ENCODE measurements at regions of chr6 and their contacts with region 1.

Region 1: DNA sequence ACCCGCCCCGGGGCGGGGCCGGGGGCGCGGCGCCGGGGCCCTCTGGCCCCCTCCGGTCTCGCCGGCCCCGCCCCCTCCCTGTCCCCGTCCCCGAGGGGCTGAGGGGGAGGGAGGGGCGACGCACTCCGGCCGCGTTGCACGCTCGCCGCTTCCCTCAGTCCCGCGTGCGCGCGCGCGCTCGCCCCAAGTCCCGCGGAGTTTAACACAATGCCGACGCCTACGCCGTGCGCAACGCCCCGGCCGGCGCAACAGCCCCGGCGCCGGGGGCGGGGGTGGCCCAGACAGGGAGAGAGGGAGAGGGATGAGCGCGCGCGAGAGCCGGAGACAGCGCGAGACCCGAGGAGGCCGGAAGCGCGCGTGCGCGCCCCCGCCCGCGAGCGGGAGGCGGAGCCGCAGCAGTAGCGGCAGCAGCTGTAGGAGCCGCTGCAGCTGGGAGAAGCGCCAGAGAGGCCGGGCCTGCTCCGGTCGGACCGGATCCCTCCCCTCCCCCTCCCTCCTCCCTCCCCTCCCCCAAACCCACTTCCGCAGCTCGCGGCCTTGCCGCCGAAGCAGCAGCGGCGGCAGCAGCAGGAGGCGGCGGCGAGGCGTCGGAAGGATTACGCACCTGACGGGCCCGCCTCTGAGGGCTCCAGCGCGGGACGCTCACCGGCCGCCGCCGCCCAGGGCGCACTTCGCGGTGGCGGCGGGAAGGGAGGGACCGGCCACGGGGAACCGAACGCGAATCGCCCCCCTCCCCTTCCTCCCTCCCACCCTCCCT is 905 bp downstream of the ZBTB2 start:
- DNase-seq: peak; percentile 95 to 99 (median 98)
- H3K4me3 ChIP-seq: peak overlapping the region; percentile 56 to 92 (median 82)
- H3K4me3 Mint-ChIP-seq: peak overlapping the region; percentile 48 to 66
- H3K27ac ChIP-seq: peak overlapping the region; percentile 86 to 91
- H3K27ac Mint-ChIP-seq: peak overlapping the region in 4 of 7 donors; percentile 37 to 88 (median 58)
- H3K4me1 ChIP-seq: peaks cover 33 to 47% of the 10 kb centered on the region in 2 donors
- H3K4me1 Mint-ChIP-seq: peaks cover 50% of the 10 kb centered on the region
- H3K27me3 ChIP-seq: no peaks in the 10 kb centered on the region
- H3K27me3 Mint-ChIP-seq: no peaks in the 10 kb centered on the region
- CTCF ChIP-seq: no peak

Region 2: DNA sequence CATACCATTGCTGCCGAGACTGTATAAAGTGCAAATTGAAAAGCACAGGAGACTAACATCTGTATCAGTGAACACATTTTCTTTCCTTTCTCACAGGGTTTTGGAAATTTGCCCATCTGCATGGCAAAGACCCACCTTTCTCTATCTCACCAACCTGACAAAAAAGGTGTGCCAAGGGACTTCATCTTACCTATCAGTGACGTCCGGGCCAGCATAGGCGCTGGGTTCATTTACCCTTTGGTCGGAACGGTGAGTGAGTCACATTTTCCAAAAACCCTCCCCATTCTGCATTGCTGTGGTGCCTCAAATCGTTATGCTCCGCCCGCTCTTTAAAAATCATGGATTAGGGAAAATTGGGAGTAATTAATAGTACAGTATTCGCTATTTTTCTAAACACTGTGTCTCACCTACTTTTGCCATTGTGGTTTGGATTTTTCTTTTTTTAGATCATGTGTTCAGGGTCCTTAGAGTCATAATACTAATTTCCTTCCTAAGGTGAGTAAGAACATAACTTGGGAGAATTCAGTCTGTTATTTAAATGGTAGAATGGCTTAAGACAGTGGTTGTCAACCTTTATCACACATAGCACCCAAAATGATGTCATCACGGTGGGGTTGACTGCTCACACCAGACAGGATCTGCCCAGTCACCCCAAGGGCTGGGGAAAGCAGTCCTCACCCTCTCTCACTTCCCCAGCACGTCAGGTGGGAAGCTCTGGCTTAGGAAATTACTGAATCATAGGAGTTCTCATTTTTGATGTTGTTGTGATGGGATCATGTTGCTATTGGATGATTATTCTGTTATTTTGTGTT is 353.4 kb before region 1 on chr6:
- intact Hi-C with region 1: loop called in 1 of 2 experiments (anchors 10 kb)
- DNase-seq: peak; percentile 77 to 96 (median 84)
- H3K4me3 ChIP-seq: no peak overlapping the region
- H3K4me3 Mint-ChIP-seq: no peak overlapping the region
- H3K27ac ChIP-seq: peak overlapping the region in 1 of 2 donors; percentile 55
- H3K27ac Mint-ChIP-seq: peak overlapping the region; percentile 54 to 94 (median 83)
- H3K4me1 ChIP-seq: peaks cover 18 to 21% of the 10 kb centered on the region in 2 donors
- H3K4me1 Mint-ChIP-seq: peaks cover 37% of the 10 kb centered on the region
- H3K27me3 ChIP-seq: no peaks in the 10 kb centered on the region
- H3K27me3 Mint-ChIP-seq: peaks cover 0 to 1% (median 0%) of the 10 kb centered on the region in 3 donors
- CTCF ChIP-seq: no peak

Region 3: DNA sequence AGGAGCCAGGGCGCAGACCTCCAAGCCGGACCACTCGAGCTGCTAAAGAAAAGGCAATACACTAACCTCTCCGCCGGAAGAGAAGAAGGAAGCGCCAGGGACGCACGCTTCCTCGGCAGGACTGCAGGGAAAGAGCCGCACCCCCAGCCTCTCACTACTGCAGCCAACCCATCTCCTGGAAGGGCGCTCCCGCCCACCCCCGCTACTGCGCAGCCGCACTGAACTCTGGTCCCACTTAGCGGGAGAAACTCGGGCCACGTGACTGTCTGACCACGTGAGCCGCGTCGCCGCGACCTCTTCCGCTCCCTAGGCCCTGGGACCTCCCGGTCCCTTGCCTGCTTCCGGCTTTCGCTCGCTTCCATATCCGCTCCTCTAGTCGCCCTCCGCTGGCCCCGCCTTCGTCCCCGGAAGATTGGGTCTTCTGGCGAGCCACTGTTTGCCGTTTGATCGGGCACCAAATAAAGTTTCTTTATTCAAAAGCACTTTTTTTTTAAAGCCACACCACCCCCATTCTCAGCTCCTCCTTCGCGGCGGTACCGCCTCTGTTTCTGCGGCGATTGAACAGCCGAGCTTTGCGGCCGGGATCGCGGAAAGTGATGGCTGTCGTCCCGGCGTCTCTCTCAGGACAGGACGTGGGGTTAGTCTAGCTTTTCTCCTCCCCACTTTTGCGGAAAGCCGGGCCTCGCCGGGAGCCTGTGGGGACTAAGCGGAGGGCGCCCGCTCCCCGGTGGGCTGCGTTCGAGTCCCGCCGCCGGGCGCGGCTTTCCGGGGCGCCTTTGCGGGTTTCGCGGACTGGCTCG is 61.7 kb after region 1 on chr6 and contains the start of gene RMND1:
- intact Hi-C with region 1: loop called (anchors 2 to 5 kb)
- DNase-seq: peak; percentile 100
- H3K4me3 ChIP-seq: peak within 1 kb of the TSS; percentile 71 to 89 (median 71)
- H3K4me3 Mint-ChIP-seq: peak within 1 kb of the TSS; percentile 97 to 98
- H3K27ac ChIP-seq: peak within 1 kb of the TSS; percentile 86 to 87
- H3K27ac Mint-ChIP-seq: peak within 1 kb of the TSS; percentile 89 to 98 (median 96)
- H3K4me1 ChIP-seq: peaks cover 21 to 30% of the 10 kb centered on the region in 2 donors
- H3K4me1 Mint-ChIP-seq: peaks cover 43% of the 10 kb centered on the region
- H3K27me3 ChIP-seq: no peaks in the 10 kb centered on the region
- H3K27me3 Mint-ChIP-seq: peaks cover 0 to 4% (median 0%) of the 10 kb centered on the region in 3 donors
- CTCF ChIP-seq: no peak
- polyA plus RNA-seq, gene RMND1: 5.7 to 6.7 (median 6.6) TPM

Region 4: DNA sequence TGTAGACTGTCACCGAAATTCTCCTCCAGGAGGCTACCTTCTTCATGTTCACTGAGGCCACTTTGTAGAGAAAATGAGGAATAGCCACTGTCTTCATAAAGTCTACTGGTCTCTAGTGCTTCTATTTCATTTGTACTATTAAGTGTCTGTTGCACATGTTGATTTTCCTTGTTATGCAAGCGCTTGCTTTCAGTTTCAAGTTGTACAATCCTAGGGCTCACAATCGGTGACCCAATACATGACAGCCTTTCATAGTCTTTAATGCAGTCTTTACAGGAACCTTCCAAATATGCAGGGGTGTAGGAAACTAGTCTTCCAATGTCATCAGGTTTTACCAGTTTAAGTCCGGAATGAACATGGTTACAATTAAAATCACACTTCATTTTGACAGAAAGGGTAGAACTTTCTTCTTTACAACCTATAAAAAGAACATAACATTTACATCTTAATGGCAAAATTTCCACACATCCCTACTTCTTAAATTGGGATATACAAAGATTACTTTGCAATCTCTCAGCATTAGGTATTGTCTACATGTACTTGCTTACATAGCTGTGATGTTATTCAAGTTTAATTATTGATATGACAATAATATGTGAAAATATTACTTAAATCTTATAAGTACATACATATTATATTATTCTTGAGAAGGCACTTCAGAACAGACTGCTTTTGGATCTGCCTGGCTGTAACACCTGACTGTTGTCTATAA is 1584.9 kb after region 1 on chr6:
- intact Hi-C with region 1: loop called in 1 of 2 experiments (anchors 10 kb)
- DNase-seq: peak; percentile 78 to 88 (median 81)
- H3K4me3 ChIP-seq: peak overlapping the region in 2 of 3 experiments; percentile 25 to 53
- H3K4me3 Mint-ChIP-seq: peak overlapping the region; percentile 13 to 77
- H3K27ac ChIP-seq: peak overlapping the region; percentile 10 to 86
- H3K27ac Mint-ChIP-seq: peak overlapping the region; percentile 90 to 96 (median 91)
- H3K4me1 ChIP-seq: peaks cover 42 to 67% of the 10 kb centered on the region in 2 donors
- H3K4me1 Mint-ChIP-seq: peaks cover 58% of the 10 kb centered on the region
- H3K27me3 ChIP-seq: no peaks in the 10 kb centered on the region
- H3K27me3 Mint-ChIP-seq: no peaks in the 10 kb centered on the region
- CTCF ChIP-seq: no peak

Measured in CD14-positive monocyte (primary cell).